GM13976 (cell line): ENCODE measurements at regions of chr7 and their contacts with region 1.

Region 1: GRCh38 chr7:120554960-120555571 is 282.1 kb downstream of the KCND2 start:
- DNase-seq: peak; percentile 44
- CTCF ChIP-seq: peak; percentile 70

Region 2: GRCh38 chr7:119270045-119270464 is 1285.0 kb before region 1 on chr7:
- in situ Hi-C with region 1: loop called (anchors 25 kb)
- DNase-seq: peak; percentile 18
- CTCF ChIP-seq: peak; percentile 81